ENCODE measurements at regions of chr3 and their contacts with region 1.

Region 1: GRCh38 chr3:101381809-101382208 is 61.4 kb upstream of the IMPG2 start:
- DNase-seq: no peak
- ATAC-seq: peak; percentile 34
- H3K4me3 Mint-ChIP-seq: no peak overlapping the region
- H3K27ac Mint-ChIP-seq: no peak overlapping the region
- H3K4me1 Mint-ChIP-seq: peaks cover 43% of the 10 kb centered on the region
- H3K27me3 Mint-ChIP-seq: no peaks in the 10 kb centered on the region
- CTCF ChIP-seq: no peak

Region 2: GRCh38 chr3:99817437-99818240 is 1564.2 kb before region 1 on chr3 and contains the start of gene CMSS1:
- CTCF ChIA-PET with region 1: no interaction called
- POLR2A ChIA-PET with region 1: no interaction called
- intact Hi-C with region 1: loop called (anchors 5 kb)
- DNase-seq: peak; percentile 96
- ATAC-seq: peak; percentile 94
- H3K4me3 Mint-ChIP-seq: peak within 1 kb of the TSS; percentile 97
- H3K27ac Mint-ChIP-seq: peak within 1 kb of the TSS; percentile 99
- H3K4me1 Mint-ChIP-seq: peaks cover 37% of the 10 kb centered on the region
- H3K27me3 Mint-ChIP-seq: no peaks in the 10 kb centered on the region
- CTCF ChIP-seq: no peak
- total RNA-seq, gene CMSS1: 37.4 and 41.1 TPM in 2 replicates

Region 3: GRCh38 chr3:100316641-100317069 is 1065.2 kb before region 1 on chr3:
- CTCF ChIA-PET with region 1: no interaction called
- POLR2A ChIA-PET with region 1: no interaction called
- intact Hi-C with region 1: loop called (anchors 1 kb)
- DNase-seq: no peak
- ATAC-seq: peak; percentile 68
- H3K4me3 Mint-ChIP-seq: no peak overlapping the region
- H3K27ac Mint-ChIP-seq: no peak overlapping the region
- H3K4me1 Mint-ChIP-seq: peaks cover 2% of the 10 kb centered on the region
- H3K27me3 Mint-ChIP-seq: no peaks in the 10 kb centered on the region
- CTCF ChIP-seq: no peak

Region 4: DNA sequence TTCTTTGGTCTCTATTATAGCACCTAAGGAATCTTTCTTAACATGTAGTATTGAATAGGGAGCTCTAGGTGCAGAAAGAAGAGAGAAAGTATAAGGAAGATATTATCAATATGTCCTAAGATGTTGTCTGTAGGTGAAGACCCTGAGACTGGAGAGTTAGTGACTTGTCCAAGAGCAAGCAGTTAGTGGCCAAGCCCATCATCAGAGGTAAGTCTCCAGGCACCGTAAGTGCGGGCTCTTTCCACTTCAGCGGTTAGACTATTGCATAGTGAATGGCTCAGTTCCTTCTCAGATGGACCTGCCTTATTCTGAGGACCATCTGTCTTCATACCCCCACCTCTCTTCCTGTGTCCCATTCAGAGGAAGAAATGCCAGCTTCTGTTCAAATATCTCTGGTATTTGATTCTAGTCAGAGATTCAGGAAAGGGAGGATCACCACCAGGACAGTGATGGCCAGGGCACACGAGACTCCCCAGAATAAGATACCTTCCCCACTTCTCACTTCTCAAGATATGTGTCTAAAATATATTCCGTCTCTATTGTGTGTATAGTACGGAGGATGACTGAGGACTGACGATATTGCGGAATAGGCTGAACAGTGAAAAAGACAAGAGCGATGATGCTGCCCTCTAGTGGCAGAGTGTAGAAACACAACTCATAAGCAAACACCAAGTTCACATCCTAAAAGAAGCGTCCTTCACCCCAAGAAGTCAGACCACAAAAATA is 791.5 kb before region 1 on chr3:
- CTCF ChIA-PET with region 1: interaction called, 7 read pairs
- POLR2A ChIA-PET with region 1: no interaction called
- intact Hi-C with region 1: loop called (anchors 2 kb)
- DNase-seq: no peak
- ATAC-seq: peak; percentile 92
- H3K4me3 Mint-ChIP-seq: no peak overlapping the region
- H3K27ac Mint-ChIP-seq: no peak overlapping the region
- H3K4me1 Mint-ChIP-seq: peaks cover 4% of the 10 kb centered on the region
- H3K27me3 Mint-ChIP-seq: peaks cover 2% of the 10 kb centered on the region
- CTCF ChIP-seq: peak; percentile 77

Region 5: GRCh38 chr3:101069901-101070798 is 311.7 kb before region 1 on chr3:
- CTCF ChIA-PET with region 1: interaction called, 23 read pairs
- POLR2A ChIA-PET with region 1: no interaction called
- intact Hi-C with region 1: loop called (anchors 1 kb)
- DNase-seq: peak; percentile 32
- ATAC-seq: peak; percentile 72
- H3K4me3 Mint-ChIP-seq: no peak overlapping the region
- H3K27ac Mint-ChIP-seq: no peak overlapping the region
- H3K4me1 Mint-ChIP-seq: no peaks in the 10 kb centered on the region
- H3K27me3 Mint-ChIP-seq: peaks cover 10% of the 10 kb centered on the region
- CTCF ChIP-seq: no peak

Region 6: DNA sequence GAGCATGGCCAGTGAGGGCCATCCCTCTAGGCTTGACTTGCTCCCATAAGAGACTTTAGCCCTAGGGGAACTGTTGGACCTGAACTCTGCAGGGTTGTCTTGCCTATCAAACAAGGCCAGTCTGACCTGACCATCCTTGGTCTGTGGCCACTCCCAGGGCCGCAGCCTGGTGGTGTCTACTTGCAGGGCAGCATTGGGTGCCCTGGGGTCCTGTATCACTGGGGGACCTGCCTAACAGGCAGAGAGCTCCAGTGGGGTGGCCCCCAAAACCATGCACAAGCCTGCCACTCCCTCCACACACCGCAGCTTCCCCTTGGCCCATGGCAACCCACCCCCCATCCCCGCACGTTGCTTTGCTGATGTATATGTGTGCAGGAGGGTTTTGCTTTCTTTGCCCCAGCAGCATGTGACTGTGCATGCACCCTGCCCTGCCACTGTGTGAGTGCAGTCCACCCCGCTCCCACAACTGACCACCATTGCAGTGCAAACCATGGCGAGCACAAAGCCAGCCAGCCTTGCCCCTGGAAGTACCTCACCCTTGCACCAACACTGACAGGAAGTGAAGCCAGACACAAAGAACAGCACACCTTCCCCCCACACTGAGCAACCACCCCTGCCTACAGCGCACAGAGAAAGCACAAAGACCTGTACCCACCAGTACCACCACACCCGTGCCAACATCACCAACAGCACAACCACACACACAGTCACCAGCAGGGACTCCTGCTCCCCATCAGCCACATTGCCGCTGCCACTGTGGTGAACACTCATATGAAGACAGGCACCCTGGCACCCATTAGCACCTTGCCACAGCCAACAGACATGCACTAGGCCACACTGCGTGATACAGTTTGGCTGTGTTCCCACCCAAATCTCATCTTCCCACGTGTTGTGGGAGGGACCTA is 42.4 kb after region 1 on chr3:
- CTCF ChIA-PET with region 1: no interaction called
- POLR2A ChIA-PET with region 1: no interaction called
- intact Hi-C with region 1: no loop called
- DNase-seq: no peak
- ATAC-seq: no peak
- H3K4me3 Mint-ChIP-seq: no peak overlapping the region
- H3K27ac Mint-ChIP-seq: no peak overlapping the region
- H3K4me1 Mint-ChIP-seq: peaks cover 34% of the 10 kb centered on the region
- H3K27me3 Mint-ChIP-seq: no peaks in the 10 kb centered on the region
- CTCF ChIP-seq: no peak

Region 7: DNA sequence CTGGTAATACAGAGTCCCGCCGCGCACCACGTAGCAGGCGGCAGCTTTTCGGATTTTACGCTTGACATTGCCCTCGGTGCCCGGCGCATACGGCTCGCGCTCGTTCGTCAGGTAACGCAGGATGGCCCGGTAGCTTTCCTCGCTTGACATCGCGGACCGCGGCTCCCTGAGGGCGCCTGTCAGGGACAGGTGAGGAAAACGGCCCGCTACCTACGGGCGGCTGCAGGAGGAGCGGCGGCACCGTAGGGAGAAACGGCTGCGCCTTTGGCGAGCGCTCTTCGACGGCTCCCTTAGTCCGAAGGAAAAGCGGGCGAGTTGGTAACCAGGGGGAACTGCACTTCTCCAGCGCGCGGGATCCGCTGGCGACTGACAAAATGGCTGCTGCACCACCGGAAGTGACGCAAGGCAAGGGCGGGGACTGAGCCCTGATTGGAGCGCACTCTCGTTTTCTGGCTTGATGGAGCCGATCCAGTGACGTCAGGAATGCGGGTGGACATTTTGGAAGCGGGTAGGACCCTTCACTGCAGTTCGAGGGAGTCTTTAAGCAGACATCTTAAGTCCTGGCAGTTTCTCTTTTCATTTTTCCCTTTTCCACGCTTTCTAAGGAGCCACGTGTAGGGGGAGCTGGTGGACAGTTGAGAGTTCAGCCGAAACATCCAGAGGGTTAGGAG is 295.1 kb after region 1 on chr3 and contains the start of gene ZBTB11:
- CTCF ChIA-PET with region 1: no interaction called
- POLR2A ChIA-PET with region 1: no interaction called
- intact Hi-C with region 1: loop called (anchors 5 kb)
- DNase-seq: peak; percentile 99
- ATAC-seq: peak; percentile 68
- H3K4me3 Mint-ChIP-seq: peak within 1 kb of the TSS; percentile 93
- H3K27ac Mint-ChIP-seq: peak within 1 kb of the TSS; percentile 96
- H3K4me1 Mint-ChIP-seq: peaks cover 56% of the 10 kb centered on the region
- H3K27me3 Mint-ChIP-seq: no peaks in the 10 kb centered on the region
- CTCF ChIP-seq: no peak
- total RNA-seq, gene ZBTB11: 26.2 and 28.7 TPM in 2 replicates

Measured in activated B cell treated with CpG ODN at 0.5 μM for 24 hours (primary cell).